H1 (cell line): ENCODE measurements at regions of chr3 and their contacts with region 1.

Region 1: DNA sequence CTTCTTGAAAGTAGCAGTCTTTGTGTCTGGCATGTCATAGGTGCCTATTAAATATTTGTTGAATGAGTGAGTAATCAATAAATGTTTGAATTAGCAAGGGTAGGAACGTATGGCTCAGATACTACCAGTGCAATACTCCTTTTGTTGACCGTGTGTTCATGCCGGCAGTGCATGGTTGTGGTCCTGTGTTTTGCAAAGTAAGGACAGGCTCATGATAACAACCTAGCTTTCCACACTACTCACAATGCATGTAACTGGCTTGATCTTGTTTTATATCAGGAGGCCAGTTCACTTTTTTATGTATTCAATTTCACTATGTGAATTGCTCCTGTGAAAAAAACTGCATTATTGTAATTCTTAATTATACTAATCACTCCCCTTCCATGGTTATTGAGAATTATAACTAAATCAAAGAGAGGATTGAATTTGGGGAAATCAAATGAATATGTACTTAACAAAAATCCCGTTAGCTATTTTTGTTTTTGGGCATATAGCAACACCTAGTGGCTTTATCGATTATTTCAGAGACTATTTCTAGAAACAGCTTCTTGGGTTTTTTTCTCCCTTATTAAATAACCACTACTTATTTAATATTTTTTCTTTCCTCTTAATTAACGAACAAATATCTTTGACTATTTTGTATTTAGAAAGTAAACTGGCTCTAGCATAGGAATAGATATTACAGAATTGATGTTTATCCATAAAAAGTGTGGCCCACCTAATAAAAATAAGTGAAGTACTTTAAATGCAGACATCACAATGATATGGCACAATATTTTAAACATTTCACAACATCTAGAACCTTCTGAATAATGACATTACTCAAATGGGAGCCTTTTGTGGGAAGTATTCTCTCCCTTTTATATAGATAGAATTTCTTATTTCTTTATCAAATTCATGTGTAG is 218.5 kb downstream of the BBX start:
- DNase-seq: no peak
- H3K4me3 ChIP-seq: no peak overlapping the region
- H3K27ac ChIP-seq: no peak overlapping the region
- H3K4me1 ChIP-seq: no peaks in the 10 kb centered on the region
- H3K27me3 ChIP-seq: no peaks in the 10 kb centered on the region
- CTCF ChIP-seq: peak in 1 of 3 experiments; percentile 30; a peak in 1 of 4 replicates
- EP300 ChIP-seq: no peak
- POLR2A ChIP-seq: no peak
- RAD21 ChIP-seq: peak in 1 of 2 experiments; percentile 64; a peak in 3 of 4 replicates

Region 2: GRCh38 chr3:107633327-107634098 is 107.7 kb before region 1 on chr3:
- CTCF ChIA-PET with region 1: no interaction called
- POLR2A ChIA-PET with region 1: no interaction called
- DNase-seq: no peak
- H3K4me3 ChIP-seq: no peak overlapping the region
- H3K27ac ChIP-seq: no peak overlapping the region
- H3K4me1 ChIP-seq: peaks cover 0 to 10% (median 3%) of the 10 kb centered on the region in 4 experiments; a peak in 2 of 7 replicates
- H3K27me3 ChIP-seq: no peaks in the 10 kb centered on the region
- CTCF ChIP-seq: no peak
- EP300 ChIP-seq: no peak
- POLR2A ChIP-seq: no peak
- RAD21 ChIP-seq: no peak

Region 3: GRCh38 chr3:107727102-107727501 is 14.1 kb before region 1 on chr3:
- CTCF ChIA-PET with region 1: interaction called, 37 read pairs
- POLR2A ChIA-PET with region 1: no interaction called
- DNase-seq: no peak
- H3K4me3 ChIP-seq: no peak overlapping the region
- H3K27ac ChIP-seq: no peak overlapping the region
- H3K4me1 ChIP-seq: peaks cover 0 to 2% (median 1%) of the 10 kb centered on the region in 4 experiments; a peak in 1 of 7 replicates
- H3K27me3 ChIP-seq: no peaks in the 10 kb centered on the region
- CTCF ChIP-seq: no peak
- EP300 ChIP-seq: no peak
- POLR2A ChIP-seq: no peak
- RAD21 ChIP-seq: no peak